ENCODE measurements at regions of chr4 and their contacts with region 1.

Region 1: GRCh38 chr4:182925298-182925738 is 8.1 kb upstream of the DCTD start:
- DNase-seq: peak; percentile 69
- H3K4me3 ChIP-seq: no peak overlapping the region
- H3K27ac ChIP-seq: no peak overlapping the region
- H3K4me1 ChIP-seq: no peaks in the 10 kb centered on the region
- H3K27me3 ChIP-seq: peaks cover 13 to 38% of the 10 kb centered on the region in 2 experiments
- CTCF ChIP-seq: peak; percentile 28 to 53
- POLR2A ChIP-seq: no peak

Region 2: DNA sequence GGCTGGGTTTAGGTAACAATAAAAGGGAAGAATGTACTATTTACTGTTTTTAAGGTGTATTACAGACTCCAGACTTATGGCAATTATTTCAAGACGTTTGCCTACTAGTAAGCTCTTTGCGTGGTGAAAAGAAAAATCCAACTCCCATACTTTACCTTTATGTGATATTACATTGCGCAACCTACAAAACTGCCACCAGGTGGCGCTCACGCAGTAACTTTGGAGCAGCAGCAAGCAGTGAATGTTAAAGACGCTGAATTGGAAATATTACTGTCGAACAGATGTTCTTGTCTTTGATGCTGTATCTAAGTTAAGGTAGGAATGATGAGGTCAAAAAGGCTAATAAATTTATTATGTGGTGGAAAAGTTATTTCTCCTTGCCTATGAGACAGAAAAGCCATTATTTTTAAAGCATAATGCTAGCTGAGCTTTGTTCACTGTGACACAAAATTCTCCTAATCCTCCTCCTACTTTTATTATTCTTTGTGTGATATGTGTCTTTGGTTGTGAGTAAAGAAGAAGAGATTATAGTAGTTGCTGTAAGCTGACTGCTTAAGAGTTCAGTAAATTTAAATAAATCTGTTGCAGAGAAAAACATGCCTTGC is 1782.0 kb before region 1 on chr4:
- CTCF ChIA-PET with region 1: interaction called, 61 read pairs
- POLR2A ChIA-PET with region 1: no interaction called
- dilution Hi-C with region 1: no loop called
- intact Hi-C with region 1: no loop called
- DNase-seq: peak; percentile 60
- H3K4me3 ChIP-seq: no peak overlapping the region
- H3K27ac ChIP-seq: no peak overlapping the region
- H3K4me1 ChIP-seq: no peaks in the 10 kb centered on the region
- H3K27me3 ChIP-seq: no peaks in the 10 kb centered on the region
- CTCF ChIP-seq: peak; percentile 72 to 75
- POLR2A ChIP-seq: no peak

Region 3: GRCh38 chr4:182642831-182643230 is 282.5 kb before region 1 on chr4:
- CTCF ChIA-PET with region 1: no interaction called
- POLR2A ChIA-PET with region 1: no interaction called
- dilution Hi-C with region 1: no loop called
- intact Hi-C with region 1: loop called (anchors 5 kb)
- DNase-seq: peak; percentile 54
- H3K4me3 ChIP-seq: no peak overlapping the region
- H3K27ac ChIP-seq: no peak overlapping the region
- H3K4me1 ChIP-seq: no peaks in the 10 kb centered on the region
- H3K27me3 ChIP-seq: no peaks in the 10 kb centered on the region
- CTCF ChIP-seq: peak; percentile 4 to 21
- POLR2A ChIP-seq: no peak

Measured in endothelial cell of umbilical vein (primary cell).